ENCODE measurements at regions of chr15 and their contacts with region 1.

Region 1: GRCh38 chr15:52019388-52020220 is 585 bp downstream of the MAPK6 start:
- DNase-seq: peak; percentile 72 to 73
- ATAC-seq: peak; percentile 54 to 68 (median 64)
- H3K4me3 ChIP-seq: peak overlapping the region; percentile 59
- H3K4me3 Mint-ChIP-seq: peak overlapping the region; percentile 94
- H3K27ac ChIP-seq: peak overlapping the region; percentile 94
- H3K27ac Mint-ChIP-seq: peak overlapping the region; percentile 95 to 99
- H3K4me1 ChIP-seq: peaks cover 11% of the 10 kb centered on the region
- H3K4me1 Mint-ChIP-seq: peaks cover 32 to 36% of the 10 kb centered on the region in 2 donors
- H3K27me3 ChIP-seq: no peaks in the 10 kb centered on the region
- H3K27me3 Mint-ChIP-seq: peaks cover 0 to 3% of the 10 kb centered on the region in 2 donors
- CTCF ChIP-seq: no peak

Region 2: DNA sequence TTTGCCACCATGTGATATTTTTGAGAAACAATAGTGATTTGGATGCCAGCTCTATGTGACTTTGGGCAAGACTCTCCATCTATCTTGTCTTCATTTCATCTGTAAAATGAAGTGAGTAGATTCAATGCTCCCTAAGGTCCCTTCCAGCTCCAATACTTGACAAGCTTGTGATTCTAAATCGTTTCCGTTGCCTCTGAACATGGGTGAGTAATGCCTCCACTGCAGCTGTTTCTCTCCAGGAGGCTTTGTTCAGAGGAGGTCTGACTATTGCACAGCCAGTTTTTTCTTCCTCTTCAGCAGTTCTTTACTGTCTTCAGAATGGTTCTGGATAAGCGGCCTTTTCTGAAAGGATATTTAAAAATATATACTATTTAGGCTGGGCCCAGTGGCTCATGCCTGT is 205.0 kb before region 1 on chr15:
- intact Hi-C with region 1: no loop called
- DNase-seq: no peak
- ATAC-seq: no peak
- H3K4me3 ChIP-seq: no peak overlapping the region
- H3K4me3 Mint-ChIP-seq: no peak overlapping the region
- H3K27ac ChIP-seq: no peak overlapping the region
- H3K27ac Mint-ChIP-seq: no peak overlapping the region
- H3K4me1 ChIP-seq: no peaks in the 10 kb centered on the region
- H3K4me1 Mint-ChIP-seq: no peaks in the 10 kb centered on the region
- H3K27me3 ChIP-seq: no peaks in the 10 kb centered on the region
- H3K27me3 Mint-ChIP-seq: peaks cover under 1 to 16% of the 10 kb centered on the region in 2 donors
- CTCF ChIP-seq: no peak

Region 3: DNA sequence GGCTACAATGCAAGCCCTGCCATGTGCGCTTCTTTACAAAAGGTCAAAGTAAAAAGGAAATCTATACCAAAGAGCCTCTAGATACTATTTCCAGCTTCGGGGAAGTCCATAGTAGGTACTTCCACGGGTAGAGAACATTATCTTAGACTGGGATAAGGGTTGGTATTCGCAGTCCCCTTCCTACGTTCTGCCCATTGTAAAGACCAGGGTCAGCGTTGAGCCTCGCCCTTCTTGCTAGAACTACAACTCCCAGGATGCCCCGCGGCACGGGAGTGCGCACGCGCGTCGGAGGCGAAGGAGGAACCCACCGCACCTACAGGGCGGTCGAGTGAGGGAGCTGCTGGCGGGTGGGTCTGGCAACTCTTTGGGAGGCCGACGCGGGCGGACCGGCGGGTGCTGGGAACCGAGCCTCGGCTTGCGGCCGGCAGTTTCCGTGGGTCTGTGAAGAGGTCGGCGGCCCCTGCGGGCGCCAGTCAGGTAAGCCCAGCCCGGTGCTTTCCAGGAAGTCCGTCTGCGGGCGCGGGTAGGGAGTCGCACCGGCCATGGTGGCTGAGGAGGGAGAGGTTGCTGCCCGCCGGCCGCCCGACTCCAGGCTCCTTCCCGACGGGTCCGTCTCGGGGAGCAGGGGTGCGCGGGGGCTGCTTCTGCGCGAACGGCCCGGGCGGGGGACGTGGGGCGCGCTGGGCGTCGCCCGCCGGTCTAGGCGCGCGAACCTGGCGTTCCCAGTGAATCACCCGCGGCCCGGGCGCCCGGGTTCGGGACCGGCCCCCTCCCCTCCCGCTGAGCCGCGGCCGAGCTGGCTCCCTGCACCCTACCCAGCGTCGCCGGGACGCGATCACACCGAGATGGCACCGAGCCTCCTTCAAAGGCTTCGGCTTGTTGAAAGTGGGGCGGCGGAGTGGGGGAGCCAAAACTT is 190.0 kb before region 1 on chr15 and contains the start of gene TMOD3:
- intact Hi-C with region 1: no loop called
- DNase-seq: peak; percentile 87 to 93
- ATAC-seq: peak; percentile 83 to 91 (median 90)
- H3K4me3 ChIP-seq: peak within 1 kb of the TSS; percentile 87
- H3K4me3 Mint-ChIP-seq: peak within 1 kb of the TSS; percentile 97
- H3K27ac ChIP-seq: peak within 1 kb of the TSS; percentile 83
- H3K27ac Mint-ChIP-seq: peak within 1 kb of the TSS; percentile 88 to 97
- H3K4me1 ChIP-seq: peaks cover 9% of the 10 kb centered on the region
- H3K4me1 Mint-ChIP-seq: peaks cover 47 to 50% of the 10 kb centered on the region in 2 donors
- H3K27me3 ChIP-seq: no peaks in the 10 kb centered on the region
- H3K27me3 Mint-ChIP-seq: peaks cover 8 to 12% of the 10 kb centered on the region in 2 donors
- CTCF ChIP-seq: no peak
- total RNA-seq, gene TMOD3: 56.5 to 72.3 (median 69.4) TPM

Region 4: DNA sequence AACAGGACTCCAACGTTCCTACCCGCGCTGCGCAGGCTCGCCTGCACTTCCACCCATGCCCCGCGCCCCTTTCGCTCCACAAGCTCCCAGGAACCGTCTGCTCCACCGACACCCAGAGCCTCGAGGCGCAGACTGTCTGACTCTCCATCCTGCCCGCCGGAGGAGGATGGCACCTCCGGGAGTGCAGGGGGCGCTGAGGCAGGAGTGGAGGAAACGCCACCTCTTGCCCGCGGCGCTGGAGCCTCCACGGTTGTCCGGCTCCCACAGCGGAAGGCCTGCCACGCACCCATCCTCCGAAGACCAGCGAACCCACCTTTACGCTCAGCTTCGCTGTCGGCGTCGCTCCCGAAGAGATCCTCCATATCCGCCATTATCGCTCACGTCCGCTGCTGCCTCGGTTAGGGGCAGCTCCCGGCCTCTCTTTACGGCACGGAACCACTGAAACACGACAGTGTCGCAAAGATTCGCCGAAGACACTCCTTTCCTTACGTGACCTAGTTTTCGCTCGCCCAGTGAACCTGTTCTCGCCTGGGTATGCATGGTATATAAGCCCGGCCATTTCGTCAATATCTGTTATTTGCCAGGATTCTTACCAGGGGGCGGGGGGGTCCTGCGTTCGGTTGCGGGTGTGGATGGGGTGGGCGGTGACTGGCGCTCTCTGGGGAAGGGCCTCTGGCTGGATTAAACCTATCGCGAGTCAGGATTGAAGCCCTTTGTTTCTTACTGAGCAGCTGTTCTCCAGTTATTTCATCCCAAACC is 48.0 kb before region 1 on chr15 and contains the start of gene LEO1:
- intact Hi-C with region 1: loop called (anchors 1 kb)
- DNase-seq: peak; percentile 80 to 97
- ATAC-seq: peak; percentile 91 to 98 (median 93)
- H3K4me3 ChIP-seq: peak within 1 kb of the TSS; percentile 77
- H3K4me3 Mint-ChIP-seq: peak within 1 kb of the TSS; percentile 99
- H3K27ac ChIP-seq: peak within 1 kb of the TSS; percentile 77
- H3K27ac Mint-ChIP-seq: peak within 1 kb of the TSS; percentile 96 to 99
- H3K4me1 ChIP-seq: peaks cover 19% of the 10 kb centered on the region
- H3K4me1 Mint-ChIP-seq: peaks cover 25 to 28% of the 10 kb centered on the region in 2 donors
- H3K27me3 ChIP-seq: no peaks in the 10 kb centered on the region
- H3K27me3 Mint-ChIP-seq: no peaks in the 10 kb centered on the region
- CTCF ChIP-seq: no peak
- total RNA-seq, gene LEO1: 13.2 to 19.5 (median 16.0) TPM

Region 5: GRCh38 chr15:52031566-52031965 is 12.0 kb after region 1 on chr15:
- intact Hi-C with region 1: loop called (anchors 1 kb)
- DNase-seq: no peak
- ATAC-seq: peak in 2 of 3 donors; percentile 47 to 73
- H3K4me3 ChIP-seq: no peak overlapping the region
- H3K4me3 Mint-ChIP-seq: no peak overlapping the region
- H3K27ac ChIP-seq: no peak overlapping the region
- H3K27ac Mint-ChIP-seq: no peak overlapping the region
- H3K4me1 ChIP-seq: no peaks in the 10 kb centered on the region
- H3K4me1 Mint-ChIP-seq: peaks cover 8 to 20% of the 10 kb centered on the region in 2 donors
- H3K27me3 ChIP-seq: no peaks in the 10 kb centered on the region
- H3K27me3 Mint-ChIP-seq: no peaks in the 10 kb centered on the region
- CTCF ChIP-seq: no peak

Measured in natural killer cell (primary cell).